Activated B cell treated with CpG ODN at 0.5 μM for 24 hours (primary cell): ENCODE measurements at regions of chr16 and their contacts with region 1.

Region 1: DNA sequence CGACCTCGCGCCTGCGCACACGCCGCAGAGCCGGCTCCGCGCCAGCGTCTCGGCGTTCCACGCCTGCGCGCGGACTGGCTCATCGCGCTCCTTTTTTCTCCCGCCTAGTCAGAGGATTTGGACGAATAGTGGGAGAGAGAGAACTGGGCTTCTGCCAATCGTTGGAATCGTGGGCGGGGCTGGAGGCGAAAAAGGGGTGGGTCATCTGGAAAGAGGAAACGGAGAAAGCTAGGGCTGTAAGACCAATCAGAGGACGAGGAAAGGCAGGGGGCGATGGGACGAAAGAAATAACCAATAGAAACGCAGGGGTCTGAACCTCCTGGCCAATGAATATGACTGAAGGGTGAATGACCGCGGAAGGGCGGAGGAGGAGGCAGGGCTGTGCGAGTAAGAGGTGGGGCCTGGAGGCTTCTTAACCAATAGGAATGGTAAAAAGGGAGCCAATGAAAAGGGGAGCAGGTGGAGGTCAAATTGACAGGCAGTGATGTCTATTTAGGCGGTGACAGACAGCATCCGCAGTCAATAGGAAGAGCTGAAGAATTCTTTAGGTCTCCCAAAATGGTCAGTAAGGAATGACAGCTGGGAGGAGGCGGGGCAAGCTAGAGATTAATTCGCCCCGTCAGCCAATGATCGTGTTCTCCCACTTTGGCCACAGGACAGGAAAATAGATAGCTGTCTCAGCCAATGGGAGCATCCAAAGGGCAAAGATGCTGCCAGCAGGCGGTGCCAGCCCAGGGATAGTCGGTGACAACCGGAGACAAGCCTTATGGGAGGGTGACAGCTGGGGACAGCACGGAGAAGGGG is at the start of gene TBC1D10B:
- DNase-seq: peak; percentile 92
- ATAC-seq: peak; percentile 83
- H3K4me3 Mint-ChIP-seq: peak within 1 kb of the TSS; percentile 87
- H3K27ac Mint-ChIP-seq: peak within 1 kb of the TSS; percentile 86
- H3K4me1 Mint-ChIP-seq: peaks cover 52% of the 10 kb centered on the region
- H3K27me3 Mint-ChIP-seq: no peaks in the 10 kb centered on the region
- CTCF ChIP-seq: no peak
- total RNA-seq, gene TBC1D10B: 46.3 and 50.2 TPM in 2 replicates

Region 2: GRCh38 chr16:30142672-30143346 is 227.8 kb before region 1 on chr16:
- CTCF ChIA-PET with region 1: no interaction called
- POLR2A ChIA-PET with region 1: no interaction called
- intact Hi-C with region 1: no loop called
- DNase-seq: no peak
- ATAC-seq: peak; percentile 57
- H3K4me3 Mint-ChIP-seq: no peak overlapping the region
- H3K27ac Mint-ChIP-seq: no peak overlapping the region
- H3K4me1 Mint-ChIP-seq: peaks cover 12% of the 10 kb centered on the region
- H3K27me3 Mint-ChIP-seq: no peaks in the 10 kb centered on the region
- CTCF ChIP-seq: no peak

Region 3: DNA sequence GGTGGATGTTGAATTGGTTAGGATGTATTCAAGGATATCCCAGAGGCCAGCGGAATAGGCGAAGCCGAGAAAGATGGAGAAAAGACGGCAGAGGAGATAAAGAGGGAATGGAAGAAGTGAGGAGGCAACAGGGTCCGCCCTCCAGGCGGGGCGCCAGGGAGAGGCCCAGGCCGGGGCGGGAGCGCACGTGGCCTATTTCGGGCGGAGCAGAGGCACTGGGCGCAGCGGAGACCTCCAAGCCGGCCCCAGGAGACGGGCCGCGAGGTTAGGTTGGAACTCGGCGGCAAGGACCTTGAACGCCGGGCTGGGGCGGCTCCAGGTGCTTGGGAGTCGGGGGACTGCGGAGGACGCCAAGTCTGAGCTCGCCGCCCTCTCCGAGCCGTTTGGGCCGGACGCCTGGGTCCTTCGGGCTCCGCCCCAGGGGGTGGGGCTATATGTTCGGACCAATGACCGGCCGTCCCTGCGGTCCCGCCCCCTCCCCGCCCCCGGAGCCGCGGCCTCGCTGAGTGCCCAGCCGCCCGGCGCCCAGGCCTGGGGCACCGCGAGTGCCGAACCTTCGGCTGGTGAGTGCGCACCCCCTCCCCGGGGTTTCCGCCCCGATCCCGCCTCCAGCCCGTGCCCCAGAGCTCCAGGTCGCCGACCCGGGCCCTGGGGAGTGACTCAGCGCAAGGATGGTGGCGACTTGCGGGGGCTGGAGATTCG is 36.6 kb after region 1 on chr16 and contains the start of gene ZNF771:
- CTCF ChIA-PET with region 1: interaction called, 18 read pairs
- POLR2A ChIA-PET with region 1: interaction called, 35 read pairs
- intact Hi-C with region 1: loop called (anchors 1 kb)
- DNase-seq: peak; percentile 90
- ATAC-seq: peak; percentile 89
- H3K4me3 Mint-ChIP-seq: peak within 1 kb of the TSS; percentile 89
- H3K27ac Mint-ChIP-seq: peak within 1 kb of the TSS; percentile 90
- H3K4me1 Mint-ChIP-seq: peaks cover 27% of the 10 kb centered on the region
- H3K27me3 Mint-ChIP-seq: no peaks in the 10 kb centered on the region
- CTCF ChIP-seq: no peak
- total RNA-seq, gene ZNF771: 4.4 and 5.2 TPM in 2 replicates